Activated CD8-positive, alpha-beta memory T cell treated with anti-CD3 and anti-CD28 coated beads, Interleukin-2, amount 10 ng/mL, durations not matched to agents 7 days and 5 days (primary cell): ENCODE measurements at regions of chr12 and their contacts with region 1.

Region 1: DNA sequence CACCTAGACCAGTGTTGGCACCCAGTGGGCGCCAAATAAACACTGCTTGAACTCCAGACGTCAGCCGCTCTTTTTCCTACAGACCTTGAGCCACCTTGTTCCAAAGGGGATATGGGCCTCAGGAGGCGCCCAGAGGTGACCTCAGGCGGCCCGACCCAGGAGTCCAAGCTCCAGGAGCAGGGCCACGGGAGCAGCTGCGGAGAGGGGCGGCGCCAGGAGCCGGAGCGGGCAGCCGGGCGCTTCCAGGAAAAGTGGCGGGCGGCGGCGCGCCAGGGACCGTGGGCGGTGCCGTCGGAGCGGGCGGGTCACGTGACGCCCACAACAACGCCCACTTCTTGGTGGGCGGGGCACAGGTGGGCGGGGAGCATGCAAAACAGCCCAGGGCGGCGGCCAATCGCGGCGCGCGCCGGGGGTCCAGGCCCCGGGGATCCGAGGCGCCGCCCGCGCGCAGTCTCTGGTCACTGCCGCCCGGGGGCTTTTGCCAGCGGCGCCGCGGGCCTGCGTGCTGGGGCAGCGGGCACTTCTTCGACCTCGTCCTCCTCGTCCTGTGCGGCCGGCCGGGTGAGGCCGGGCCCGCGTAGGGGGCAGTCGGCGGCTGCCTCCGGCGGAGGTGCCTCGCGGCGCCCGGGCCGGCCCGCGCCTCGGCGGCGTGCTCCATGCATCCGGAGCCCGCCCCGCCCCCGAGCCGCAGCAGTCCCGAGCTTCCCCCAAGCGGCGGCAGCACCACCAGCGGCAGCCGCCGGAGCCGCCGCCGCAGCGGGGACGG is at the start of gene ORAI1:
- DNase-seq: peak; percentile 97
- ATAC-seq: peak; percentile 80
- H3K4me3 Mint-ChIP-seq: peak within 1 kb of the TSS; percentile 88
- H3K27ac Mint-ChIP-seq: peak within 1 kb of the TSS; percentile 95
- H3K4me1 Mint-ChIP-seq: peaks cover 40% of the 10 kb centered on the region
- H3K27me3 Mint-ChIP-seq: no peaks in the 10 kb centered on the region
- total RNA-seq, gene ORAI1: 53.7 to 61.1 TPM

Region 2: DNA sequence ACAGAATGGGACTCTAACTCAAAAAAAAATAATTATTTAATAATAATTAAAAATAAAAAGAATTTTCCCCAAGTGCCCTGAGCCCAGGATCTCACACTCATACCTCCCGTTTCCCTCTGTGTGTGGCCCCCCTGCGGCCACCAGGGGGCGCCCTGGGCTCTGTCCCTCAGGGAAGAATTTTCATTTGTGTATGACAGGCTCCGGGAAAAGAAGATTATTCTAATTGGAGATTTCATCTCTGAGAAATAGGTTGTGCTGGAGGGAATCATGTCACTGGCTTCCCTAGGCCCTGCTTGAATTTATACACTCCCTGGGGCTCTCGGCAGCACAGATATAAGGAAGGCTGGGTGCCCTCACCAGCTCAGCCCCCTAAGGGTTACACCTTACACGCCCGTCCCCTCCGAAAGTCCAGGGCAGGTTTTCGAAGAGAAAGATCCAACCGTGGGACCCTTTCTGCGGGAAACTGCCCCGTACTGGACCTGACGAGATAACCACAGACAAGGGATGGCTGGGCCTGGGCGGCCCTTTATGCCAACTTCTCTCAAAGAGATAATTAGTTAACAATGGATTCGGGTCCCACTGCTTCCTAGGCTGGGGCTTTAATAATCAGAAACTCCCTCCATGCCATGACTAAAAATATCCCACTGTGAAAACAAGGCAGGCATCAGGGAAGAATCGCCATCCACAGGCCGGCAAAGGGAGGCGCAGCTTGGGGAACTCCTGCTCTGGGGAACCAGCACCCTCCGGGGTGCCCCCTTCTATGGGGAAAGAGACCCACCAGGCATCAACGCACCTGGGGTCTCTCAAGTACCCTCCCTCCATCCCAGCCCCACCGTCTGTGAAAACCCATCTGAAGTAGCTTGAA is 126.1 kb before region 1 on chr12:
- CTCF ChIA-PET with region 1: interaction called, 28 read pairs
- DNase-seq: peak; percentile 74
- ATAC-seq: peak; percentile 80
- H3K4me3 Mint-ChIP-seq: no peak overlapping the region
- H3K27ac Mint-ChIP-seq: no peak overlapping the region
- H3K4me1 Mint-ChIP-seq: peaks cover 25% of the 10 kb centered on the region
- H3K27me3 Mint-ChIP-seq: no peaks in the 10 kb centered on the region

Region 3: GRCh38 chr12:121530600-121531355 is 95.5 kb before region 1 on chr12:
- CTCF ChIA-PET with region 1: no interaction called
- DNase-seq: peak; percentile 89
- ATAC-seq: peak; percentile 91
- H3K4me3 Mint-ChIP-seq: peak overlapping the region; percentile 6
- H3K27ac Mint-ChIP-seq: peak overlapping the region; percentile 88
- H3K4me1 Mint-ChIP-seq: peaks cover 45% of the 10 kb centered on the region
- H3K27me3 Mint-ChIP-seq: no peaks in the 10 kb centered on the region

Region 4: DNA sequence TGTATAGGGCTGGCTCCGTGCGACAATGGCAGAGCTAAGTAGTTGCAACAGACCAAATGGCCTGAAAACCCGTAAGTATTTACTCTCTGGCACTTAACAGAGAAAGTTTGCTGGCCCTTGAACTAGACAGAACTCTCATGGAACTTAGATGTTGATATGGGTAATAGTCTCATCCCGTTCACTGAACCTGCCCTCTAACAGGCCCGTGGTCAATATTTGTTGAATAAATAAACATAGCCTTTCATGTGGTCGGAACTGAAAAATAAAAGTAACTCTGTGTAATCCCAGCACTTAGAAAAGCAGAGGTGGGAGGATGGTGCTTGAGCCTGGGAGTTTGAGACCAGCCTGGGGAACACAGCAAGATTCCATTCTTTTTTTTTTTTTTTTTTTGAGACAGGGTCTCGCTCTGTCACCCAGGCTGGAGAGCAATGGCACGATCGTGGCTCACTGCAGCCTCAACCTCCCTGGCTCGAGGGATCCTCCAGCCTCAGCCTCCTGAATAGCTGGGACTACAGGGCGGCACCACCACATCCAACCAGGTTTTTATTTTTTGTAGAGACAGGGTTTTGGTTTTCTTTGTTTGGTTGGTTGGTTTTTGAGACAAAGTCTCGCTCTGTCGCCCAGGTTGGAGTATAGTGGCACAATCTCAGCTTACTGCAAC is 75.2 kb before region 1 on chr12:
- CTCF ChIA-PET with region 1: interaction called, 111 read pairs
- DNase-seq: no peak
- ATAC-seq: no peak
- H3K4me3 Mint-ChIP-seq: no peak overlapping the region
- H3K27ac Mint-ChIP-seq: no peak overlapping the region
- H3K4me1 Mint-ChIP-seq: peaks cover 13% of the 10 kb centered on the region
- H3K27me3 Mint-ChIP-seq: no peaks in the 10 kb centered on the region

Region 5: GRCh38 chr12:121608301-121608700 is 18.0 kb before region 1 on chr12:
- CTCF ChIA-PET with region 1: no interaction called
- DNase-seq: no peak
- ATAC-seq: no peak
- H3K4me3 Mint-ChIP-seq: no peak overlapping the region
- H3K27ac Mint-ChIP-seq: no peak overlapping the region
- H3K4me1 Mint-ChIP-seq: peaks cover 2% of the 10 kb centered on the region
- H3K27me3 Mint-ChIP-seq: no peaks in the 10 kb centered on the region

Region 6: GRCh38 chr12:121637231-121637914 is 11.1 kb after region 1 on chr12:
- CTCF ChIA-PET with region 1: interaction called, 54 read pairs
- DNase-seq: peak; percentile 87
- ATAC-seq: peak; percentile 85
- H3K4me3 Mint-ChIP-seq: peak overlapping the region; percentile 44
- H3K27ac Mint-ChIP-seq: peak overlapping the region; percentile 90
- H3K4me1 Mint-ChIP-seq: peaks cover 45% of the 10 kb centered on the region
- H3K27me3 Mint-ChIP-seq: no peaks in the 10 kb centered on the region

Region 7: GRCh38 chr12:121668750-121669520 is 42.7 kb after region 1 on chr12:
- CTCF ChIA-PET with region 1: interaction called, 34 read pairs
- DNase-seq: peak; percentile 68
- ATAC-seq: no peak
- H3K4me3 Mint-ChIP-seq: no peak overlapping the region
- H3K27ac Mint-ChIP-seq: no peak overlapping the region
- H3K4me1 Mint-ChIP-seq: peaks cover 51% of the 10 kb centered on the region
- H3K27me3 Mint-ChIP-seq: no peaks in the 10 kb centered on the region

Region 8: GRCh38 chr12:121688966-121689365 is 62.7 kb after region 1 on chr12:
- CTCF ChIA-PET with region 1: interaction called, 11 read pairs
- DNase-seq: no peak
- ATAC-seq: no peak
- H3K4me3 Mint-ChIP-seq: no peak overlapping the region
- H3K27ac Mint-ChIP-seq: no peak overlapping the region
- H3K4me1 Mint-ChIP-seq: peaks cover 14% of the 10 kb centered on the region
- H3K27me3 Mint-ChIP-seq: peaks cover 2% of the 10 kb centered on the region

Region 9: DNA sequence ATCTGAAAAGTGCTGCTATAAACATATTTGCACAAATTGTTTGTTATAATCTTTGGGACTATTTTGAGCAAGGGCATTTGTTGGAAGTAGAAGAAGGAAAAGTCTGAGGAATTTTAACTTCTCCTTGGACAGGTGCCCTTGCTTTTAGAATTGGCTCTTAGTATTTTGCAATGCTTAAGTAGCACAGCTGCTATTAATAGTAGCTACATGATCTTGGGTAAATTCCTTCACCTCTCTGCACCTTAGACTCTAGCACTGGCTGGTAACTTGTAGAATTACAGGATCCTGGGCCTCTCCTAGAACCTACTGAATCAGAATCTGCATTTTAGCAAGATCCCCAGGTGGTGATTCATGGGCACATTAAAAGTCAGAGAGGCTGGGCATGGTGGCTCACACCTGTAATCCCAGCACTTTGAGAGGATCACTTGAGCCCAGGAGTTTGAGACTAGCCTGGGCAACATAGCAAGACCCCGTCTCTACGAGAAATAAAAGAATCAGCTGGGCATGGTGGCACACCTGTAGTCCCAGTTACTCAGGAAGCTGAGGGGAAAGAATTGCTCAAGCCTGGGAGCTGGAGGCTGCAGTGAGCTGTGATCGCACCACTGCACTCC is 75.5 kb after region 1 on chr12:
- CTCF ChIA-PET with region 1: no interaction called
- DNase-seq: no peak
- ATAC-seq: no peak
- H3K4me3 Mint-ChIP-seq: no peak overlapping the region
- H3K27ac Mint-ChIP-seq: no peak overlapping the region
- H3K4me1 Mint-ChIP-seq: peaks cover 2% of the 10 kb centered on the region
- H3K27me3 Mint-ChIP-seq: no peaks in the 10 kb centered on the region

Region 10: DNA sequence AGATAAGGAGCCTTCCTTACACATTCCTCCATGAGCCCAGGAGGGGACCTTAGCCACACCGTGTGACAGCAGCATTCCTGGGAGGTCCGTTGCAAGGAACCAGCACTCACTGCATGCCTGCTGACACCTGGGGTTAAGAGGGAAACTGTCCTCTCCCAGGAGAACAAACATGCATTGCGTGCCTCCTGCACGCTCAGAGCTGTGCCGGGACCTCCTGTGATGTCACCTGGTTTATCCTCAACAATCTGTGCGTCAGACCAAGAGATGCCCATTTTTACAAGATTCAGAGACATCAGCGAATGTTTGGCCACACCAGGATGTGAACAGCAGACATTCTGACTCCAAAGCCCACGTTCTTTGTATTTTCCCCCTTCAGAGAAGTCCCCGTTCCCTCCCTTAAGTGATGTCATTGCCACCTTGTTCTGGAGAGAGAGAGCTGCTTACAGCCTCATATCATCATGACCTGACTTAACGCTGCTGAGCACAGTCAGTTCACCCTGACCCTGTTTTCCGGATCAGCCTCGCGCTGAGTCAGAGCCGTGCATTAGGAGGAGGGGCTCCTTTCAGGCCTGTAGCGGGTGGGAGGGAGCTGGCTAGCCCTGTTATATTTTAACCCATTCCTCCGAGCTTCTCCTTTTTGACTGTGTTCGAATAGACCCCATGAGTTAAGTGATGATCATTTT is 122.4 kb after region 1 on chr12:
- CTCF ChIA-PET with region 1: no interaction called
- DNase-seq: no peak
- ATAC-seq: peak; percentile 59
- H3K4me3 Mint-ChIP-seq: no peak overlapping the region
- H3K27ac Mint-ChIP-seq: no peak overlapping the region
- H3K4me1 Mint-ChIP-seq: no peaks in the 10 kb centered on the region
- H3K27me3 Mint-ChIP-seq: no peaks in the 10 kb centered on the region